Psoas muscle (tissue), 8 donors: ENCODE measurements at regions of chr11 and their contacts with region 1.

Region 1: DNA sequence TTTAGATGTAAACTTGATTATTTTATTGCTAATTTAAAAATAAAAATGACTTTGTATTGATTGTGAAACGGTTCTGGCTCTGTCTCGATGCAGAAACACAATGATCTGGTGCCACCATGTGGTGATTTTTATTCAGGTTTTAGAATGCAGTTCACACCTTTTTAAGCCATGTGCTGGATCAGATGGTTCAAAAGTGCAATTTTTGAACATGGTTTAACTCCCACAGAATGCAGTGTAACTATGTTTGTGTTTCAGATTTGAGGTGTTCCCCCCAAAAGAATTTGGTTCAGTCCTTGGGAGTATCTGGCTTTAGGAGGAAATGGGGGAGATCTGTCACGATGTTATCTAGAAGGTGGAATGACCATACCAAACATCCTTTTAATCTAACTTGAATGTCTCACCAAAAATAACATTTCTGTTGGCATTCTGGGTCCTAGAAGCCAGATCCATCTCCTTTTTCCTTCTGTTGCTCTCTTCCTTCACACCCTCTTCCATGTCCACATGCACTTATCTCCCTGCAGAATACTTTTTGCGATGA is 7.9 kb downstream of the MRPL16 start:
- DNase-seq: no peak
- ATAC-seq: peak; percentile 79 to 94 (median 84)
- H3K4me3 ChIP-seq: peak overlapping the region; percentile 10
- H3K27ac ChIP-seq: peak overlapping the region; percentile 71
- H3K4me1 ChIP-seq: peaks cover 8% of the 10 kb centered on the region
- H3K27me3 ChIP-seq: no peaks in the 10 kb centered on the region
- CTCF ChIP-seq: peak; percentile 79

Region 2: GRCh38 chr11:59534676-59535075 is 268.0 kb before region 1 on chr11:
- intact Hi-C with region 1: loop called (anchors 5 to 10 kb)
- DNase-seq: no peak
- ATAC-seq: no peak
- H3K4me3 ChIP-seq: no peak overlapping the region
- H3K27ac ChIP-seq: no peak overlapping the region
- H3K4me1 ChIP-seq: peaks cover 6% of the 10 kb centered on the region
- H3K27me3 ChIP-seq: no peaks in the 10 kb centered on the region
- CTCF ChIP-seq: no peak

Region 3: DNA sequence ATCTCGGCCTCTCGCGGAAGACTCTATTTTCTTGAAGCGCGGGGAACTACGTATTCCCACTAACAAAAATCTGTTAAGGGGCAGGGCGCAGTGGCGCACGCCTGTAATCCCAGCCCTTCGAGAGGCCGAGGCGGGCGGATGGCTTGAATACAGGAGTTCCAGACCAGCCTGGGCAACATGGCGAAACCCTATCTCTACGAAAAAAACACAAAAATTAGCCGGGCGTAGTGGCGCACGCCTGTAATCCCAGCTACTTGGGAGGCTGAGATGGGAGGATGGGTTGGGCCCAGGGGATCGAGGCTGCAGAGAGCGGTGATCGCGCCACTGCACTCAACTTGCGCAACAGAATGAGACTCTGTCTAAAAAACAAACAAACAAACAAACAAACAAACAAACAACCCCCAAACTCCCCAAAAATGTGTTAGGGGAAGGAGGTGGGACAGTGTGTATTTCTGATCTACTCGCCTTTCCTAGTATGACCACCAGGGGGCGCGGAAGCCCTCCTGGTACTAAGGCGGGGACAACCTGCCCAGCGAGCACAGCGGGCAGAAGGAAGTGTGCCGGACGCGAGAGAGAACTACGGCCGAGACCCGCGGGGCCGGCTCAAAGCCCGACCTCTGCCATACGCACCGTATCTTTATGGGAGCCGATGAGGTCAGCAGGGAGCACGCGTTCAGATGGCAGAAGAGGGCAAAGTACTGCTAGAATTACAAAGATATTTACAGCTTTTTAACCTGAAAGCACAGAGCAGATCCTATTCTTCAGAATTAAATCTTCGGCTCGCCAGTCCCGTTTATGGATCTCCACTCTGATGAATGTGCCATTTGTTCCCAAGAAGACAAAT is 48.8 kb before region 1 on chr11:
- intact Hi-C with region 1: loop called (anchors 1 to 2 kb)
- DNase-seq: peak; percentile 85 to 91
- ATAC-seq: peak; percentile 69 to 79 (median 74)
- H3K4me3 ChIP-seq: peak overlapping the region; percentile 89
- H3K27ac ChIP-seq: peak overlapping the region; percentile 92
- H3K4me1 ChIP-seq: peaks cover 15% of the 10 kb centered on the region
- H3K27me3 ChIP-seq: no peaks in the 10 kb centered on the region
- CTCF ChIP-seq: peak; percentile 96

Region 4: GRCh38 chr11:59849129-59849528 is 46.4 kb after region 1 on chr11:
- intact Hi-C with region 1: no loop called
- DNase-seq: no peak
- ATAC-seq: no peak
- H3K4me3 ChIP-seq: no peak overlapping the region
- H3K27ac ChIP-seq: no peak overlapping the region
- H3K4me1 ChIP-seq: no peaks in the 10 kb centered on the region
- H3K27me3 ChIP-seq: no peaks in the 10 kb centered on the region
- CTCF ChIP-seq: no peak

Region 5: GRCh38 chr11:60797846-60798630 is 995.3 kb after region 1 on chr11:
- intact Hi-C with region 1: no loop called
- DNase-seq: peak in 1 of 2 donors; percentile 26
- ATAC-seq: no peak
- H3K4me3 ChIP-seq: no peak overlapping the region
- H3K27ac ChIP-seq: no peak overlapping the region
- H3K4me1 ChIP-seq: no peaks in the 10 kb centered on the region
- H3K27me3 ChIP-seq: peaks cover 0 to 3% (median 0%) of the 10 kb centered on the region in 3 donors
- CTCF ChIP-seq: no peak